Activated CD4-positive, alpha-beta memory T cell treated with anti-CD3 and anti-CD28 coated beads, Interleukin-2, amount 10 ng/mL, durations not matched to agents 7 days and 5 days (primary cell): ENCODE measurements at regions of chr12 and their contacts with region 1.

Region 1: DNA sequence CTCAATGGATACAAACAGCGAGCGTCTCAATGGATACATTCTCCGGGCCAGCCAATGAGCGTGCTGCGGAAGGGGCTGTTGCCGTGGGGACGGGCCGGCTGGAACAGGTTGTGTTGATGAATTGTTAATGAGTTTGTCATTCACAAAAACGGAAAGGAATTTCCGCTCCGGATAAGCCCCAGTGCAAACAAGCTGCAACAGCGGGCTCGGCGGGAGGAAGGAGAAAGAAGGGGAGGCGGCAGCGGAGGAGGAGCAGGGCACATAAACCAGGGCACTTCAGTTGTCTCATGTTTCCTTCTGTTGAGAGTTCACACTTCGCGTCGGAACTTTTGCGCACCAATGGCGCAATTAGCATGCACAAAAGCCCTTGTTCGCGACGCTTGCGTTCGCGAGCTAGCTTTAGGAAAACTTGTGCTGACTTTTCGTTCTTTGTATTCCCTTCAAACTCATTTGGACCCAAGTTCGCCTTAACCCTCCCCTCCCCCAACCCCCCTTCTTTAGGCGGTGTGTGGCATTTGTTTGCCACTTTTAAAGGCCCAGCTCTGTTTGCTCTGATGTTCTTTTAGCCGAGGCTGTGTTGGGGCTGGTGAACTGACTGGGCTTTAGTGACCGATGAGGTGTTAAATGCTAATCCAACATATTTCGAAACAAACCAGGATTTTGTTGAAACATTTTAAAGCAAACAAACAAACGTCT is at the start of gene DUSP6:
- DNase-seq: peak; percentile 98
- H3K4me3 Mint-ChIP-seq: peak within 1 kb of the TSS; percentile 98
- H3K27ac Mint-ChIP-seq: peak within 1 kb of the TSS; percentile 96
- H3K4me1 Mint-ChIP-seq: peaks cover 45% of the 10 kb centered on the region
- H3K27me3 Mint-ChIP-seq: no peaks in the 10 kb centered on the region
- total RNA-seq, gene DUSP6: 170 to 171 TPM

Region 2: GRCh38 chr12:89064780-89065179 is 287.9 kb before region 1 on chr12:
- CTCF ChIA-PET with region 1: no interaction called
- POLR2A ChIA-PET with region 1: interaction called, 11 read pairs
- DNase-seq: no peak
- H3K4me3 Mint-ChIP-seq: no peak overlapping the region
- H3K27ac Mint-ChIP-seq: no peak overlapping the region
- H3K4me1 Mint-ChIP-seq: peaks cover 5% of the 10 kb centered on the region
- H3K27me3 Mint-ChIP-seq: no peaks in the 10 kb centered on the region

Region 3: GRCh38 chr12:89225808-89226411 is 126.7 kb before region 1 on chr12:
- CTCF ChIA-PET with region 1: interaction called, 4 read pairs
- POLR2A ChIA-PET with region 1: interaction called, 58 read pairs
- DNase-seq: peak; percentile 30
- H3K4me3 Mint-ChIP-seq: peak overlapping the region; percentile 12
- H3K27ac Mint-ChIP-seq: peak overlapping the region; percentile 92
- H3K4me1 Mint-ChIP-seq: peaks cover 73% of the 10 kb centered on the region
- H3K27me3 Mint-ChIP-seq: no peaks in the 10 kb centered on the region

Region 4: DNA sequence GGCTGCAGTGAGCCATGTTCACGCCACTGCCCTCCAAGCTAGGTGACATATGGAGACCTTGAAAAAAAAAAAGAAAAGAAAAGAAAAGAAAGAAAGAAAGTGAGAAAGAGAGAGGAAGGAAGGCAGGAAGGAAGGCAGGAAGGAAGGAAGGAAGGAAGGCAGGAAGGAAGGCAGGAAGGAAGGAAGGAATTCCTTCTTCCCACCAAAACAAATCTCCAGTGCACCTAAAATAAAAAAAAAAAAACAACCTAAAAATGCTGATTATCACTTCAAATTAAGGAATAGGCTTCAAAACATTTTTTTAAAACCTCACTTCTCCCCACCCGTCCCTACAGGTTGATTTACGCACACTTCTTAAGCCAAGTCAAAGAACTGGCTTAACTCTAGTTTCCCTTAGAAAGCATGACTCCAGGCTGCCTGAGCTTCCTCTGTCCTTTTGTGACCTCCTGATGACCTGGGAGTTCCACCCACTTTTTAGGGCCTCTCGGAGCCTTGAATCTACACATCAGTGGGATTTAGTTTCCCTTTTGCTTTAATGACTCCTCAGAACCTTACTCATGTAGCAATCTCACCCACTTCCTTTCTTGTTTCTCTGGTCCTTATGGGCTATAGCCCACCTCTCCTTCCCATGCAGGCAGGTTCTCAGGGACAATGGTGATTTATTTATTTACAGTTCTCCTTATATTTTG is 18.9 kb before region 1 on chr12:
- CTCF ChIA-PET with region 1: interaction called, 3 read pairs
- POLR2A ChIA-PET with region 1: interaction called, 20 read pairs
- DNase-seq: peak; percentile 55
- H3K4me3 Mint-ChIP-seq: peak overlapping the region; percentile 49
- H3K27ac Mint-ChIP-seq: peak overlapping the region; percentile 54
- H3K4me1 Mint-ChIP-seq: peaks cover 29% of the 10 kb centered on the region
- H3K27me3 Mint-ChIP-seq: no peaks in the 10 kb centered on the region

Region 5: DNA sequence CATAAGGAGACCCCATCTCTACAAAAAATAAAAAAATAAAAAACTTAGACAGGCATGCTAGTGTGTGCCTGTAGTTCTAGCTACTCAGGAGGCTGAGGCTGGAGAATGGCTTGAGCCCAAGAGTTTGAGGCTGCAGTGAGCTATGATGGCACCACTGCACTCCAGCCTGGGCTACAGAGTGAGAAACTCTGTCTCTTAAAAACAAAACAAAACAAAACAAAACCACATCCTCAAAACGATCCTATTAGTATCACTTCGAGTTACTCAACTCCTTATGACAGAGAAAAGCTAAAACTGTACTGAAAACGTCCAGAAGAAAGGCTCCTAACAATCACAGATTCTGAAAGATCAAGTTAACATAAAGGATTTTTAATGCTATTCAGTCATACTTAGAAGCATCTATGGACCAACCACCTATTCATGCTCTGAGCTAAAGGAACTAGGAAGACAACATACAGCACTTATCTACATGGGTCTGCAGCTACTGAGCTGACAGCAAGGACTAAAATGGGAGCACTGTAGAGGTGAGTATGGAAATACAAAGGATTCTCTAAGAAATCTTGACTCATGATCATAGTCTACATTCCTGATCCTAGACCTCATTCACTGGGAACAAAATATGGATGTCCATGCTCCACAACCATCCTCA is 75.0 kb after region 1 on chr12:
- CTCF ChIA-PET with region 1: no interaction called
- POLR2A ChIA-PET with region 1: interaction called, 43 read pairs
- DNase-seq: peak; percentile 48
- H3K4me3 Mint-ChIP-seq: peak overlapping the region; percentile 53
- H3K27ac Mint-ChIP-seq: peak overlapping the region; percentile 88
- H3K4me1 Mint-ChIP-seq: peaks cover 48% of the 10 kb centered on the region
- H3K27me3 Mint-ChIP-seq: no peaks in the 10 kb centered on the region

Region 6: GRCh38 chr12:89709157-89709994 is 356.7 kb after region 1 on chr12:
- CTCF ChIA-PET with region 1: no interaction called
- POLR2A ChIA-PET with region 1: interaction called, 29 read pairs
- DNase-seq: peak; percentile 99
- H3K4me3 Mint-ChIP-seq: peak overlapping the region; percentile 85
- H3K27ac Mint-ChIP-seq: peak overlapping the region; percentile 81
- H3K4me1 Mint-ChIP-seq: peaks cover 25% of the 10 kb centered on the region
- H3K27me3 Mint-ChIP-seq: peaks cover 6% of the 10 kb centered on the region

Region 7: GRCh38 chr12:90042920-90043641 is 690.4 kb after region 1 on chr12:
- CTCF ChIA-PET with region 1: no interaction called
- POLR2A ChIA-PET with region 1: no interaction called
- DNase-seq: no peak
- H3K4me3 Mint-ChIP-seq: no peak overlapping the region
- H3K27ac Mint-ChIP-seq: no peak overlapping the region
- H3K4me1 Mint-ChIP-seq: peaks cover 23% of the 10 kb centered on the region
- H3K27me3 Mint-ChIP-seq: no peaks in the 10 kb centered on the region